Left colon (tissue), 2 donors: ENCODE measurements at regions of chr18 and their contacts with region 1.

Region 1: GRCh38 chr18:2932247-2933181 is 80.4 kb downstream of the LPIN2 start:
- DNase-seq: no peak
- ATAC-seq: peak; percentile 65

Region 2: GRCh38 chr18:2985628-2986027 is 53.1 kb after region 1 on chr18:
- intact Hi-C with region 1: no loop called
- DNase-seq: no peak
- ATAC-seq: peak; percentile 30

Region 3: GRCh38 chr18:3062798-3063680 is 130.5 kb after region 1 on chr18:
- intact Hi-C with region 1: loop called in 1 of 2 experiments (anchors 2 kb)
- DNase-seq: peak; percentile 58 to 86
- ATAC-seq: peak; percentile 75

Region 4: DNA sequence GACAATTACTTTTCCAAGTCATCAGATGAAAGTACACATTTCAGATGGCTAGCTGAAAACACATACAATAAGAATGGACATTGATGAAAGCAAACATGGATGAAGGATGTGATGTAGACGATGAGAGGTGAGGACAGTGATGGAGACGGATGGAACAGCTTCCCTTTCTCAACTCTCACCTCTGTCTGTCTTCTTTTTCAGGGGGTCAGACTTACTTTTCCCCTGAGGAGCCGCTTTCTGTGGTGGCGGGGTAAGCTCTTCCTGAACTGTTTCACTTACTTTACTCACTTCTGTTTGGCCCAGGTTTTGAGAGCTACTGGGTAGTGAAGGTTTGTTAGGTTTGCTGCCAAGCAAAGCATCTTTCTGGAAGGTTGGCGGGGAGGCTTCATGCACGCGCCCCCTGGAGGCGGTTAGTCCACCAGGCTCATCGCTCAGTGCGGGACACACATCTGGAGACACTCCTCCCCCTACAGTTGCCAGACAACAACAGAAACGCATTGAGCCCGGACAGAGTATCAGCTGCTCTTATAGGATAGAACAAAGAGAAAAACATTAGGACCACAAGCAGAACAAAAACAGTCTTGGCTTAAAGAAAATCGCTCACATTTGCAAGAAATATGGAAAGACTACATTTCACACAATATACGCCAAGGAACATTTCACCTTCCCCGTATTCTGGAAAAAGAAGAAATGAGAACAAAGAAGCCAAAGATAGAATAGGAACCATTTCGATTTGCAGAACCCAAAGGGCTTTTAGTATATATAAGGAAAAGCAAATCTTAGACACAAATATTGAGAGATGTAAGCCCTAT is 196.7 kb after region 1 on chr18:
- intact Hi-C with region 1: loop called in 1 of 2 experiments (anchors 5 kb)
- DNase-seq: peak; percentile 80 to 90
- ATAC-seq: peak; percentile 95

Region 5: DNA sequence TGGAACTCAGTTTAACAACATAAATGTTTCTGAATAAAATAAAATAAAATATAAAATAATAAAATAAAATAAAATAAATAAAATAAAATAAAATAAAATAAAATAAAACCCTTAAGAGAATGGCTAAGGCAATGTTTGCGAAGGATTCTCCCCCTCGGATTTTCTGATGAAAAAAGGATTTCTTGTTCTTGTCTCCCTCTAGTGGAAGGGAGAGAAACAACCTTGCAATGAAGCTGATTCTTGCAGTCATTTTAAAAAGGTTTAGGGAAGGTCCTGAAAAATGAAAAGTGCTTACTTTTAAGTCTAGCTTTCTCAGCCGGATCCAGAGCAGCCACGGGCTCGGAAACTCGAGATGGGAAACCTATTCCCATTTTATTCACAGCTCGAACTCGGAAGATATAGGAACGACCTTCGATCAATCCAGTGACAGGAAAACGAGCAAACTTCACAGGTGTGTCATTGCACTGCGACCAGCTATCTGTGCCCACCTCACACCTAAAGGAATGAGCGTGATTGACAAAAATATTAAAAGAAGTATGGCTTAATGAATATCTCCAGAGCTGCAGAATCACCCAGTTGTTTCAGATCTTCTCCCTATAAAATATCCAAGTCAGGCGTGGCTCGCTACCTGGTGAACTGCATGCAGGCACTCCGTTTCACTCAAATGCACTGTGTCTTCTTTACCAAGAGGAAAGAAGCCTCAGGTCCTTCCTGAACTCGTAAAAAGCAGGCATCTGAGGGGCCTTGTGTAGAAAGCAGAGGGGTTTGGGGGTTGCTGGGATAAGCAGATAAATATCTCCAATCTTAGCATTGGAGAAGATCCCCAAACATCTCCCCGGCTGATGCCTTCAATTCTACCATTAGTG is 219.1 kb after region 1 on chr18:
- intact Hi-C with region 1: loop called in 1 of 2 experiments (anchors 5 kb)
- DNase-seq: peak in 1 of 2 donors; percentile 15
- ATAC-seq: peak; percentile 63

Region 6: GRCh38 chr18:3245853-3246634 is 313.5 kb after region 1 on chr18:
- intact Hi-C with region 1: loop called in 1 of 2 experiments (anchors 2 kb)
- DNase-seq: peak; percentile 90 to 91
- ATAC-seq: peak; percentile 68